PC-9 (cell line): ENCODE measurements at regions of chr15 and their contacts with region 1.

Region 1: GRCh38 chr15:50238263-50238662 is 27.3 kb downstream of the HDC start:
- DNase-seq: no peak
- H3K4me3 ChIP-seq: no peak overlapping the region
- H3K27ac ChIP-seq: no peak overlapping the region
- H3K4me1 ChIP-seq: peaks cover 10% of the 10 kb centered on the region
- H3K27me3 ChIP-seq: no peaks in the 10 kb centered on the region
- CTCF ChIP-seq: no peak

Region 2: GRCh38 chr15:49225613-49226281 is 1012.5 kb before region 1 on chr15:
- CTCF ChIA-PET with region 1: no interaction called
- POLR2A ChIA-PET with region 1: interaction called, 30 read pairs
- intact Hi-C with region 1: no loop called
- DNase-seq: peak in 1 of 2 experiments; percentile 5
- H3K4me3 ChIP-seq: no peak overlapping the region
- H3K27ac ChIP-seq: no peak overlapping the region
- H3K4me1 ChIP-seq: no peaks in the 10 kb centered on the region
- H3K27me3 ChIP-seq: no peaks in the 10 kb centered on the region
- CTCF ChIP-seq: no peak